GM23248 (cell line): ENCODE measurements at regions of chr22 and their contacts with region 1.

Region 1: GRCh38 chr22:44625981-44626687 is 75.9 kb upstream of the PRR5 start:
- DNase-seq: peak; percentile 75
- H3K4me3 ChIP-seq: no peak overlapping the region
- H3K27ac ChIP-seq: no peak overlapping the region
- H3K4me1 ChIP-seq: no peaks in the 10 kb centered on the region
- H3K27me3 ChIP-seq: no peaks in the 10 kb centered on the region

Region 2: DNA sequence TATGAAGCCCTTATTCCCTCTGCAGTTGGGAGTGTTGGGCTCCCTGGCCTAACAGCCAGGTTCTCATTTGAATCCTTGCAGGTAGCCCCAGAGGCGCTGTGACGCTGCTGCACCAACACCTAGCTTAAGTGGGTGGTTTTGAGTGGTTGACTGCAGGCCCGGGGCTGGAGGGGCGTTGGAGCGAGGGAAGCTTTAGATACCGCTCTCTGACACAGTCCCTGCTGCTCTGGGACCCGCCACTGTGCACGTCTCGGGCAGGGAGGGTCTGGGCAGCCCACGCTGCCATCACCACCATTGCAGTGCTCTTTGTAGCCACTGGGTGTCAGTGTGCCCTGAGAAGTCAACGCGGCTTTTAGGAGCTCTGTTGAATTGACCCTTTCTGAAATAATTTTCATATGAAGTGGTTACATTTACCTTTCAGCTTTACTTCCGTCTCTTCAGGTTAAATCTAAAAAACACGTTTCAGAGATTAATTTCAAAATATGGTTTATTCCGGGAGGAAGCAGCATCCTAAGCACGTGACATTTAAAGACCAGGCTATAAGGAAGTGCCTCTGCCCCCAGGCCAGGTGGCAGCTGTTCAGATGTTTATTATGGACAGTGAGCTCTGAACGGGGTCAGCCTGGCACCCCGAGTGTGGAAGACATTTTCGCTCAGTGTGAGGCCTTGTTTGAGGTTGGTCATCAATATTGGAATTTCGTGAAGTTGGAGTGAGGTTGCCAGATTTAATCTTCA is 632.9 kb before region 1 on chr22:
- in situ Hi-C with region 1: loop called (anchors 10 kb)
- DNase-seq: peak; percentile 78
- H3K4me3 ChIP-seq: no peak overlapping the region
- H3K27ac ChIP-seq: peak overlapping the region; percentile 82
- H3K4me1 ChIP-seq: peaks cover 16% of the 10 kb centered on the region
- H3K27me3 ChIP-seq: no peaks in the 10 kb centered on the region

Region 3: GRCh38 chr22:44080936-44081861 is 544.9 kb before region 1 on chr22:
- in situ Hi-C with region 1: loop called (anchors 10 kb)
- DNase-seq: peak; percentile 79
- H3K4me3 ChIP-seq: no peak overlapping the region
- H3K27ac ChIP-seq: no peak overlapping the region
- H3K4me1 ChIP-seq: peaks cover 9% of the 10 kb centered on the region
- H3K27me3 ChIP-seq: no peaks in the 10 kb centered on the region

Region 4: DNA sequence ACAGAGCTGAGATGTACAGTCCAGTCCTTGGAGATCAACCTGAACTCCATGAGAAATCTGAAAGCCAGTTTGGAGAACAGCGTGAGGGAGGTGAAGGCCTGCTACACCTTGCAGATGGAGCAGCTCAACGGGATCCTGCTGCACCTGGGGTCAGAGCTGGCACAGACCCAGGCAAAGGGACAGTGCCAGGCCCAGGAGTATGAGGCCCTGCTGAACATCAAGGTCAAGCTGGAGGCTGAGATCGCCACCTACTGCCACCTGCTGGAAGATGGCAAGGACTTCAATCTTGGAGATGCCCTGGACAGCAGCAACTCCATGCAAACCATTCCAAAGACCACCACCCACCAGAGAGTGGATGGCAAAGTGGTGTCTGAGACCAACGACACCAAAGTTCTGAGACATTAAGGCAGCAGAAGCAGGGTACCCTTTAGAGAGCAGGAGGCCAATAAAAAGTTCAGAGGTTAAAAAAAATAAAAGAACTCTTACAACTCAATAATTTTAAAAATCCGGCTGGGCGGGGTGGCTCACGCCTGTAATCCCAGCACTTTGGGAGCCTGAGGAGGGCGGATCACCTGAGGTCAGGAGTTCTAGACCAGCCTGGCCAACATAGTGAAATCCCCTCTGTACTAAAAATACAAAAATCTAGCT is 58.2 kb before region 1 on chr22:
- in situ Hi-C with region 1: no loop called
- DNase-seq: peak; percentile 52
- H3K4me3 ChIP-seq: no peak overlapping the region
- H3K27ac ChIP-seq: no peak overlapping the region
- H3K4me1 ChIP-seq: no peaks in the 10 kb centered on the region
- H3K27me3 ChIP-seq: no peaks in the 10 kb centered on the region